Psoas muscle (tissue), 8 donors: ENCODE measurements at regions of chr9 and their contacts with region 1.

Region 1: GRCh38 chr9:81689343-81690190 is at the start of gene TLE1:
- DNase-seq: peak; percentile 100
- ATAC-seq: peak; percentile 87 to 95 (median 91)
- H3K4me3 ChIP-seq: peak within 1 kb of the TSS; percentile 86
- H3K27ac ChIP-seq: peak within 1 kb of the TSS; percentile 79
- H3K4me1 ChIP-seq: peaks cover 21% of the 10 kb centered on the region
- H3K27me3 ChIP-seq: no peaks in the 10 kb centered on the region
- CTCF ChIP-seq: no peak
- total RNA-seq, gene TLE1: 14.6 to 40.9 (median 35.7) TPM

Region 2: GRCh38 chr9:81416451-81417298 is 272.9 kb before region 1 on chr9:
- intact Hi-C with region 1: loop called in 1 of 2 experiments (anchors 5 kb)
- DNase-seq: no peak
- ATAC-seq: peak; percentile 96 to 99 (median 96)
- H3K4me3 ChIP-seq: no peak overlapping the region
- H3K27ac ChIP-seq: peak overlapping the region; percentile 81
- H3K4me1 ChIP-seq: peaks cover 26% of the 10 kb centered on the region
- H3K27me3 ChIP-seq: no peaks in the 10 kb centered on the region
- CTCF ChIP-seq: no peak

Region 3: DNA sequence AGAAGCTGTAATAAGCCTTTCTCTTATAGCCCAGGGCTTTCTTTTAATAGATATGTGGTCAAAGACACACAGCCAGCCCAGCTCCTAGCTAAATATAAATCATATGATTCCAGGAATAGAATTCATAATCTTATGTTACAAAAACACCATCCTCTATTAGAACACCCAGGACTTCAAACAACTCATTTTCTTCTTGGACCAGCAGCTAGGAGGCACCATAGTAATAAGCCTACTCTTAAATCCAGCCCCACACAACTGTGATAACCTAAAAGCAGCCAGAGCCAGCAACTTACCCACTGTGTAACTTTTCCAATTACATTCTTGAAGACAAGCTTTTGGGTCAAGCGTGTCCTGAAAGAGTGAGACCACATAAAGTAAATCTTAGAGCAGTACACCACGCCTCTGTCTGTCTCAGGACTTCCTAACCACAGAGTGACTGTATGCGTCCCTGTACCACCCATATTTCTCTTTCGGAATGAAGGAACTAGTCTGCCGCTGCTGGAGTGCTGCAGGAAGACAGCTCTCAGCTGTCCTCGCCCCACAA is 224.0 kb before region 1 on chr9:
- intact Hi-C with region 1: loop called in 1 of 2 experiments (anchors 5 kb)
- DNase-seq: no peak
- ATAC-seq: peak; percentile 82 to 92 (median 88)
- H3K4me3 ChIP-seq: peak overlapping the region; percentile 42
- H3K27ac ChIP-seq: peak overlapping the region; percentile 83
- H3K4me1 ChIP-seq: peaks cover 16% of the 10 kb centered on the region
- H3K27me3 ChIP-seq: no peaks in the 10 kb centered on the region
- CTCF ChIP-seq: peak; percentile 42

Region 4: DNA sequence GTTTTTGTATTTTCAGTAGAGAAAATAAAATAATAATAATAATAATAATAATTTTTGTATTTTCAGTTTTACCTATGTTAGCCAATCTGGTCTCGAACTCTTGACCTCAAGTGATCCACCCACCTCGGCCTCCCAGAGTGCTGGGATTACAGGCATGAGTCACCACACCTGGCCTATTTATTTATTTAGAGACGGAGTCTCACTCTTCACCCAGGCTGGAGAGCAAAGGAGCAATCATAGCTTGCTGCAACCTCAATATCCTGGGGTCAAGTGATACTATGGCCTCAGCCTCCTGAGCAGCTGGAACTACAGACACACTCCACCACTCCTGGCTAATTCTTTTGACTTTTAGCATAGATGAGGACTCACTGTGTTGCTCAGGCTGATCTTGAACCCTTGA is 167.7 kb before region 1 on chr9:
- intact Hi-C with region 1: loop called (anchors 1 to 5 kb)
- DNase-seq: no peak
- ATAC-seq: peak in 3 of 4 donors; percentile 48 to 59 (median 55)
- H3K4me3 ChIP-seq: no peak overlapping the region
- H3K27ac ChIP-seq: no peak overlapping the region
- H3K4me1 ChIP-seq: no peaks in the 10 kb centered on the region
- H3K27me3 ChIP-seq: peaks cover 0 to 2% (median 0%) of the 10 kb centered on the region in 3 donors
- CTCF ChIP-seq: no peak

Region 5: GRCh38 chr9:81592887-81593266 is 96.7 kb before region 1 on chr9:
- intact Hi-C with region 1: loop called (anchors 5 to 10 kb)
- DNase-seq: peak; percentile 43 to 73
- ATAC-seq: peak in 3 of 4 donors; percentile 60 to 72 (median 71)
- H3K4me3 ChIP-seq: no peak overlapping the region
- H3K27ac ChIP-seq: no peak overlapping the region
- H3K4me1 ChIP-seq: peaks cover 13% of the 10 kb centered on the region
- H3K27me3 ChIP-seq: no peaks in the 10 kb centered on the region
- CTCF ChIP-seq: no peak

Region 6: GRCh38 chr9:81619348-81620001 is 70.1 kb before region 1 on chr9:
- intact Hi-C with region 1: loop called (anchors 5 kb)
- DNase-seq: no peak
- ATAC-seq: peak in 1 of 4 donors; percentile 13
- H3K4me3 ChIP-seq: no peak overlapping the region
- H3K27ac ChIP-seq: peak overlapping the region; percentile 38
- H3K4me1 ChIP-seq: peaks cover 17% of the 10 kb centered on the region
- H3K27me3 ChIP-seq: no peaks in the 10 kb centered on the region
- CTCF ChIP-seq: no peak

Region 7: GRCh38 chr9:82606492-82607382 is 917.2 kb after region 1 on chr9:
- intact Hi-C with region 1: loop called in 1 of 2 experiments (anchors 2 kb)
- DNase-seq: no peak
- ATAC-seq: peak; percentile 77 to 95 (median 86)
- H3K4me3 ChIP-seq: no peak overlapping the region
- H3K27ac ChIP-seq: no peak overlapping the region
- H3K4me1 ChIP-seq: peaks cover 7% of the 10 kb centered on the region
- H3K27me3 ChIP-seq: no peaks in the 10 kb centered on the region
- CTCF ChIP-seq: peak; percentile 75